T-cell (primary cell): ENCODE measurements at regions of chr19 and their contacts with region 1.

Region 1: GRCh38 chr19:39406656-39407393 is at the start of gene ZFP36:
- DNase-seq: peak; percentile 75 to 93 (median 85)
- ATAC-seq: peak; percentile 30 to 51 (median 44)
- H3K4me3 ChIP-seq: peak within 1 kb of the TSS; percentile 97
- H3K4me3 Mint-ChIP-seq: peak within 1 kb of the TSS; percentile 83 to 97 (median 85)
- H3K27ac ChIP-seq: peak within 1 kb of the TSS; percentile 100
- H3K27ac Mint-ChIP-seq: peak within 1 kb of the TSS; percentile 95 to 98
- H3K4me1 ChIP-seq: peaks cover 41 to 79% of the 10 kb centered on the region in 2 experiments
- H3K4me1 Mint-ChIP-seq: peaks cover 55 to 68% (median 60%) of the 10 kb centered on the region in 3 donors
- H3K27me3 ChIP-seq: no peaks in the 10 kb centered on the region
- H3K27me3 Mint-ChIP-seq: no peaks in the 10 kb centered on the region
- total RNA-seq, gene ZFP36: 208 to 1,013 (median 233) TPM

Region 2: GRCh38 chr19:39254531-39255345 is 152.1 kb before region 1 on chr19:
- CTCF ChIA-PET with region 1: no interaction called
- POLR2A ChIA-PET with region 1: no interaction called
- DNase-seq: no peak
- ATAC-seq: no peak
- H3K4me3 ChIP-seq: no peak overlapping the region
- H3K4me3 Mint-ChIP-seq: no peak overlapping the region
- H3K27ac ChIP-seq: no peak overlapping the region
- H3K27ac Mint-ChIP-seq: no peak overlapping the region
- H3K4me1 ChIP-seq: peaks cover 0 to 4% of the 10 kb centered on the region in 2 experiments
- H3K4me1 Mint-ChIP-seq: peaks cover 3 to 12% (median 7%) of the 10 kb centered on the region in 3 donors
- H3K27me3 ChIP-seq: peaks cover 0 to 12% of the 10 kb centered on the region in 2 experiments
- H3K27me3 Mint-ChIP-seq: peaks cover 0 to 5% of the 10 kb centered on the region in 2 donors

Region 3: DNA sequence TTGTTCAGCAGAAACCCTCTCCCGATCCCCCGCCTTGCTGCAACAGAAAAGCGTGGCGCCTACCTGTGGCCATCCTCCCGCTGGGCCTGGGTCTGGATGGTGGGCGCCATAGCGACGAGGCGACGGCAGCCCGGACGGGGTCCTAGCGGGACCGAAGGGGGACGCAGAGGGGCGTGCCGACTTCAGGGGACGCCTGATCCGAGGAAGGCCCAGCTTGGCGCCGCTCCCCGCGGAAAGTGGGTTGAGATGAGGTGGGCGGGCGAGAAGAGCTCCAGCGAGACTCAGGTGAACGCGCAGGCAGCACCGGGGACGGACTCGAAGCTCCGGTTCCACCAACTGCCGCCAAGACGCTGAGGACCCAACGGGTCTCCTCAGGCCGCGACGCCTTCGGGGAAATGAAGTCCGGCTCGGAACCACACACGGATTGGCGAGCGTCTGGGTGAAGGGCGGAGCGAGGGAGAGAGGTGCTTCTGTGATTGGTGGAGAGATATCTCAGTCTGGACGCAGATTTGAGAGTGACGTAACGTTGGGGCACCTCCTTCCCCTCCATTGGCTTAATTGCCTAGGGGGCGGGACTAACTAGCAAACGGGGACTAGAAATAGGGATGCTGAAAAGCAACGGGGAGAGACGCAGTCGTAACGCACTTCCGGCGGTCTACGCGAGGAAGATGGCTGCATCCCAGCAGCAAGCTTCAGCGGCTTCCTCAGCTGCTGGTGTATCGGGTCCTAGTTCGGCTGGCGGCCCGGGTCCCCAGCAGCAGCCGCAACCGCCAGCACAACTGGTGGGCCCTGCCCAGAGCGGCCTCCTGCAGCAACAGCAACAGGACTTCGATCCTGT is 15.9 kb before region 1 on chr19 and contains the starts of genes MED29 and PAF1:
- CTCF ChIA-PET with region 1: interaction called, 3 to 5 read pairs
- POLR2A ChIA-PET with region 1: interaction called, 5 to 14 read pairs
- DNase-seq: peak; percentile 85 to 99 (median 97)
- ATAC-seq: peak; percentile 90 to 96 (median 95)
- H3K4me3 ChIP-seq: peak within 1 kb of the TSS; percentile 89 to 99
- H3K4me3 Mint-ChIP-seq: peak within 1 kb of the TSS; percentile 94 to 98 (median 98)
- H3K27ac ChIP-seq: peak within 1 kb of the TSS; percentile 98
- H3K27ac Mint-ChIP-seq: peak within 1 kb of the TSS; percentile 97 to 100
- H3K4me1 ChIP-seq: peaks cover 7 to 37% of the 10 kb centered on the region in 2 experiments
- H3K4me1 Mint-ChIP-seq: peaks cover 37 to 51% (median 48%) of the 10 kb centered on the region in 3 donors
- H3K27me3 ChIP-seq: no peaks in the 10 kb centered on the region
- H3K27me3 Mint-ChIP-seq: no peaks in the 10 kb centered on the region
- total RNA-seq, gene MED29: 42.0 to 48.7 (median 47.0) TPM
- total RNA-seq, gene PAF1: 43.0 to 96.1 (median 45.9) TPM

Region 4: DNA sequence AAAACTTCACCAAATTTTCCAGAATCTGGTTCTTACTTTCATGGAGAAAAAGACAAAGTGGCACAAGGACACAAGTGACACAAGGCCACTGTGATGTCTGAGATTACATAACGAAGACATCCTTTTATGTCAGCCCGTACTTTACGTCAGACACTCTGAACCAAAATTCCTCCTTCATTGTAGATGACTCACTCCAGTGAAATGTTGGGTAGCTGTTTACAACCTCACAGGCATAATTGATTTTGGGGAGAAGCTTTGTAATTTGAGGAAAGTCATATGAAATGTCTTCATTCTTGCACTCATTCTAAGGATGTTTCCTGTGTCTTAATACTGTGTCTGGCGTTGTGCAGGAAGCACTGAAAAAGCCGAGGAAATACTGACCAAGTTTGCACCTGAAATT is 277.4 kb after region 1 on chr19:
- CTCF ChIA-PET with region 1: interaction called in 1 of 2 experiments, 11 read pairs
- POLR2A ChIA-PET with region 1: no interaction called
- DNase-seq: no peak
- ATAC-seq: no peak
- H3K4me3 ChIP-seq: no peak overlapping the region
- H3K4me3 Mint-ChIP-seq: no peak overlapping the region
- H3K27ac ChIP-seq: no peak overlapping the region
- H3K27ac Mint-ChIP-seq: no peak overlapping the region
- H3K4me1 ChIP-seq: peaks cover 0 to 16% of the 10 kb centered on the region in 2 experiments
- H3K4me1 Mint-ChIP-seq: peaks cover 18 to 23% (median 22%) of the 10 kb centered on the region in 3 donors
- H3K27me3 ChIP-seq: no peaks in the 10 kb centered on the region
- H3K27me3 Mint-ChIP-seq: no peaks in the 10 kb centered on the region